ENCODE measurements at regions of chr19 and their contacts with region 1.

Region 1: GRCh38 chr19:42132851-42133528 is 744 bp upstream of the POU2F2 start:
- DNase-seq: peak; percentile 69 to 95 (median 83)
- ATAC-seq: peak; percentile 69
- H3K4me3 ChIP-seq: peak overlapping the region; percentile 64 to 96
- H3K4me3 Mint-ChIP-seq: peak overlapping the region; percentile 83
- H3K27ac ChIP-seq: peak overlapping the region; percentile 54 to 68
- H3K27ac Mint-ChIP-seq: peak overlapping the region; percentile 86
- H3K4me1 ChIP-seq: peaks cover 66% of the 10 kb centered on the region
- H3K4me1 Mint-ChIP-seq: peaks cover 63% of the 10 kb centered on the region
- H3K27me3 ChIP-seq: no peaks in the 10 kb centered on the region
- H3K27me3 Mint-ChIP-seq: no peaks in the 10 kb centered on the region
- CTCF ChIP-seq: peak; percentile 93

Region 2: GRCh38 chr19:42075616-42076379 is 57.2 kb before region 1 on chr19 and contains the start of gene ZNF574:
- CTCF ChIA-PET with region 1: no interaction called
- POLR2A ChIA-PET with region 1: no interaction called
- intact Hi-C with region 1: loop called (anchors 1 kb)
- DNase-seq: peak; percentile 97 to 100 (median 98)
- ATAC-seq: peak; percentile 95
- H3K4me3 ChIP-seq: peak within 1 kb of the TSS; percentile 72 to 76
- H3K4me3 Mint-ChIP-seq: peak within 1 kb of the TSS; percentile 97
- H3K27ac ChIP-seq: peak within 1 kb of the TSS; percentile 94 to 100
- H3K27ac Mint-ChIP-seq: peak within 1 kb of the TSS; percentile 99
- H3K4me1 ChIP-seq: peaks cover 21% of the 10 kb centered on the region
- H3K4me1 Mint-ChIP-seq: peaks cover 37% of the 10 kb centered on the region
- H3K27me3 ChIP-seq: no peaks in the 10 kb centered on the region
- H3K27me3 Mint-ChIP-seq: no peaks in the 10 kb centered on the region
- CTCF ChIP-seq: no peak
- total RNA-seq, gene ZNF574: 25.0 to 26.2 TPM

Region 3: DNA sequence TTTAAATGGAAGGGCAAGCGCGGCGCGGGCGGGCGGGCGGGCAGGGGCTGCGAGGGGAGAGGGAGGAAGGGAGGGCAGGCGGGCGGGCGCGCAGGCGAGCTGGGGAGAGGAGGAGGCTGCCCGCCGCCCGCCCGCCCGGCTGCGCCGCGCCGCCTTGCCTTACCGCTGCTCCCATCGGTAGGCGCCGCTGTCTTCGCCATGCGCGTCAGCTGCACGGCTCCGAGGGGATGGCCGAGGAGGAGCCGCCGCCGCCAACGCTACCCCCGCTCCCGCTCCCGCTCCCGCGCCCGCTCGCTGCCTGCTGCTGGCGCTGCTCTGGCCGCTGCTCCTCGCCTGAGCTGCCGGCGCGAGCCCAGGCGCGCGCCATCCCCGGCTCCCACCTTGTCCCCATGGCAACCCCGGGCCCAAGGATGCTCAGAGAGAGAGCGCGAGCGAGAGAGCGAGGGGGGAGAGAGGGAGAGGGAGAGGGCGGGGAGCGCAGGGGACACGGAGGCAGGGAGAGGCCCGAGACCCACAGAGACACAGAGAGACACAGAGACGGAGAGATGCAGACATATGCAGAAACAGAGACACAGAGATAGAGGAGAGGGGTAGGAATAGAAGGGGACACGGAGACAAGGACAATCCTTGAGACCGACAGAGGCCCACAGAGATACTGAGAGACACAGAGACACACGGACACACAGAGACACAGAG is 44.1 kb after region 1 on chr19:
- CTCF ChIA-PET with region 1: interaction called, 75 read pairs
- POLR2A ChIA-PET with region 1: interaction called, 4 read pairs
- intact Hi-C with region 1: loop called (anchors 2 kb)
- DNase-seq: peak; percentile 52 to 90 (median 74)
- ATAC-seq: peak; percentile 95
- H3K4me3 ChIP-seq: peak overlapping the region; percentile 49 to 50
- H3K4me3 Mint-ChIP-seq: no peak overlapping the region
- H3K27ac ChIP-seq: no peak overlapping the region
- H3K27ac Mint-ChIP-seq: no peak overlapping the region
- H3K4me1 ChIP-seq: peaks cover 17% of the 10 kb centered on the region
- H3K4me1 Mint-ChIP-seq: peaks cover 12% of the 10 kb centered on the region
- H3K27me3 ChIP-seq: peaks cover 0 to 22% of the 10 kb centered on the region in 2 experiments
- H3K27me3 Mint-ChIP-seq: peaks cover 27% of the 10 kb centered on the region
- CTCF ChIP-seq: peak; percentile 43

Region 4: DNA sequence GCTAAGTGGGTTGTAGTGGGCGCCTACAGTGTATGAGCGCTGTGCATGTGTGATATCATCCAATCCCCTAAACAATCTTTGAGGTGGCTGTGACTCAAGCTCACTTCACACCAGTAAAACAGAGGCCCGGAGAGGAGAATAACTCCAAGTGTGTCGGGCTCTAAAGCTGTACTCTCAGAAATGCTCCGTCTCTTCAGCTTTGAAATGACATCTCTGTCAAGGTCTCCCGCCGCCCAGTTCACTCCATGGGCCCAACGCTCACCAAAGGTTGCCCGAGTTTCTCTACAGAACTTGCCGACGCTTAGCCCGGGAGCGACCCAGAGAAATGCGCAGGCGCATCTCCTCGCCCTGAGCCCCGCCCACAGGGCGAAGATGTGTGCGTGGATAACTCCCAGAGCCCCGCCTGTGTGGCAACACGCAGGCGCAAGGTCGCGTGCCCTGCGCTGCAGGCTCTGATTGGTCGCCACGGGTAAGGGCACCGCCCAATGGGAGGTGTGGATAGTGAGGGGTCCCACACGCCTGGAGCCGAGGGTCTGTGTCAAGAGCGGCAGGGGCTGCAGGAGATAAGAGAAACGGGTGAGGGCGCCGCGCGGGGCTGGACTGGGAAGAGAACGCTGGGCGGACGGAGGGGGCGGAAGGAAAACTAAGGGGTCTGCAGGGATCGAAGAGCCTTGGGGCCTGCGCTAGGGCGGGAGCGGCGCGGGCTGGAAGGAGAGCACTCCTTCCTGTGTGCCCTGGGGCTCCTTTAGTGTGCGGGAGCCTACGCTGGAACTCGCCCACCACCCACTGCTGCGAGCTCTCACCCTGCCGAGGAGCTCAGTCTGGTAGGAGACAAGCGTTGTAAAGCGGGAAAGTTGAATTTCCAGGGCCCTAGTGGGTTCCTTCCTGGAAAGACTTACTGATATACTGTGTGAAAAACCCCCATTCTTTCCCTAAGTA is 87.1 kb after region 1 on chr19 and contains the start of gene ZNF526:
- CTCF ChIA-PET with region 1: interaction called, 13 read pairs
- POLR2A ChIA-PET with region 1: no interaction called
- intact Hi-C with region 1: loop called in 1 of 2 experiments (anchors 1 kb)
- DNase-seq: peak; percentile 94 to 99 (median 96)
- ATAC-seq: peak; percentile 79
- H3K4me3 ChIP-seq: peak within 1 kb of the TSS; percentile 85 to 90
- H3K4me3 Mint-ChIP-seq: peak within 1 kb of the TSS; percentile 96
- H3K27ac ChIP-seq: peak within 1 kb of the TSS; percentile 72 to 73
- H3K27ac Mint-ChIP-seq: peak within 1 kb of the TSS; percentile 95
- H3K4me1 ChIP-seq: peaks cover 42% of the 10 kb centered on the region
- H3K4me1 Mint-ChIP-seq: peaks cover 52% of the 10 kb centered on the region
- H3K27me3 ChIP-seq: no peaks in the 10 kb centered on the region
- H3K27me3 Mint-ChIP-seq: no peaks in the 10 kb centered on the region
- CTCF ChIP-seq: no peak
- total RNA-seq, gene ZNF526: 8.7 to 9.4 TPM

Region 5: DNA sequence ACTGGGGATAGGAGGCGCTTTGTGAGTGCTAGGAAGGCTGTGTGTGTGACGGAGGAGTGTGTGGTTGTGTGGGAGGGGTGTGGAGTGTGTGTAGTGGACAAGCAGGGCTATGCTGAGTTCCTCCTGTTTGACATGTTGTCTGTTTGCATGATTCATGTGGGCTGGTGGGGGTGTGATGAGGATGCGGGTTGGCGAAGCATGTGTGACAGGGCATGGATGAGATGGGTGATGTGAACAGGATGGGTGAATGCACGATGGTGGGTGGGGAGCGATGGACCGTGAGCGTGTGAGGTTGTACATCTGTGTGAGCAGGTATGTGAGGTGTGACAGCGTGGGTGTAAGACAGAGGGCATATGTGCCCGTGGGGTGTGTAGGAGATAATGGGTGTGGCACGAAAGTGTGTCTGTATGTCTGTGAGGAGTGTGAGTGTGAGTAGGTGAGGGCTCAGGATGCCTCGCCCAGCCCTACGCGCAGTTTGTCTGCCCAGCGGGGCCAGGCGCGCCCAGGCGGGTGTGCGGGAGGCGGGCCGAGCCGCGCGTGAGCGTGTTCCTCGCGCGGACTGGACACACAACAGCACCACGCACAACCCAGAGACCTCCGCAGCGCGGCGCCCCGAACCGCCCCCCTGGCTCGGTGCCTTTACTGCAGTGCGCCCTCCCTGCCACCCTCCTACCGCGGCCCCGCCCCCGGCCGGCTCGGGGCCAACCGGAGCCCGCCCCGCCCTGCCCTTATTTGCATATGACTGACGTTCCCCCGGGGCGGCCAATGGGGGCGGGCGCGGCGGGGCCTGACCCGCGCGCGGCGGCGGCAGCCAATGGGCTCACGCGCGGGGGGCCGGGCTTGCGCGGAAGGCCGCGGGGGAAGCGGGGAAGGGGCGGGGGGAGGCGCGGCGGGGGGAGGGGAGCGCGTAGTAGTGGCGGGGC is 150.4 kb after region 1 on chr19:
- CTCF ChIA-PET with region 1: interaction called, 22 read pairs
- POLR2A ChIA-PET with region 1: interaction called, 4 read pairs
- intact Hi-C with region 1: loop called (anchors 1 kb)
- DNase-seq: peak; percentile 90 to 98 (median 97)
- ATAC-seq: peak; percentile 69
- H3K4me3 ChIP-seq: peak overlapping the region; percentile 40 to 59
- H3K4me3 Mint-ChIP-seq: no peak overlapping the region
- H3K27ac ChIP-seq: peak overlapping the region; percentile 85 to 94
- H3K27ac Mint-ChIP-seq: no peak overlapping the region
- H3K4me1 ChIP-seq: peaks cover 47% of the 10 kb centered on the region
- H3K4me1 Mint-ChIP-seq: peaks cover 48% of the 10 kb centered on the region
- H3K27me3 ChIP-seq: no peaks in the 10 kb centered on the region
- H3K27me3 Mint-ChIP-seq: no peaks in the 10 kb centered on the region
- CTCF ChIP-seq: no peak

Region 6: GRCh38 chr19:42325273-42325895 is 192.4 kb after region 1 on chr19 and contains the start of gene MEGF8:
- CTCF ChIA-PET with region 1: interaction called, 3 read pairs
- POLR2A ChIA-PET with region 1: interaction called, 3 read pairs
- intact Hi-C with region 1: loop called (anchors 1 kb)
- DNase-seq: peak; percentile 96 to 99 (median 98)
- ATAC-seq: peak; percentile 93
- H3K4me3 ChIP-seq: peak within 1 kb of the TSS; percentile 85 to 98
- H3K4me3 Mint-ChIP-seq: peak within 1 kb of the TSS; percentile 97
- H3K27ac ChIP-seq: peak within 1 kb of the TSS; percentile 36 to 56
- H3K27ac Mint-ChIP-seq: peak within 1 kb of the TSS; percentile 88
- H3K4me1 ChIP-seq: peaks cover 12% of the 10 kb centered on the region
- H3K4me1 Mint-ChIP-seq: peaks cover 24% of the 10 kb centered on the region
- H3K27me3 ChIP-seq: peaks cover 4 to 7% of the 10 kb centered on the region in 2 experiments
- H3K27me3 Mint-ChIP-seq: peaks cover 12% of the 10 kb centered on the region
- CTCF ChIP-seq: peak; percentile 66
- total RNA-seq, gene MEGF8: 5.2 to 5.9 TPM

Measured in CD8-positive, alpha-beta T cell (primary cell).